ENCODE measurements at regions of chr6 and their contacts with region 1.

Region 1: GRCh38 chr6:166382933-166383801 is at the start of gene MPC1:
- DNase-seq: peak; percentile 92 to 96
- ATAC-seq: peak; percentile 79 to 87
- H3K4me3 ChIP-seq: peak within 1 kb of the TSS; percentile 80 to 94 (median 90)
- H3K27ac ChIP-seq: peak within 1 kb of the TSS; percentile 93 to 99 (median 96)
- H3K4me1 ChIP-seq: peaks cover 25 to 34% of the 10 kb centered on the region in 2 donors
- H3K27me3 ChIP-seq: no peaks in the 10 kb centered on the region
- CTCF ChIP-seq: no peak
- POLR2A ChIP-seq: peak; percentile 82 to 94
- total RNA-seq, gene MPC1: 75.0 to 127 (median 97.4) TPM

Region 2: GRCh38 chr6:166275714-166276166 is 107.4 kb before region 1 on chr6:
- in situ Hi-C with region 1: no loop called
- intact Hi-C with region 1: loop called (anchors 5 kb)
- DNase-seq: peak in 1 of 2 donors; percentile 42
- ATAC-seq: peak; percentile 62 to 77
- H3K4me3 ChIP-seq: no peak overlapping the region
- H3K27ac ChIP-seq: no peak overlapping the region
- H3K4me1 ChIP-seq: no peaks in the 10 kb centered on the region
- H3K27me3 ChIP-seq: no peaks in the 10 kb centered on the region
- CTCF ChIP-seq: peak; percentile 86 to 100 (median 91)
- POLR2A ChIP-seq: no peak

Region 3: GRCh38 chr6:166342349-166343149 is 40.6 kb before region 1 on chr6 and contains the start of gene SFT2D1:
- in situ Hi-C with region 1: no loop called
- intact Hi-C with region 1: loop called (anchors 1 kb)
- DNase-seq: peak; percentile 65 to 76
- ATAC-seq: peak; percentile 94 to 96
- H3K4me3 ChIP-seq: peak within 1 kb of the TSS; percentile 91 to 100 (median 94)
- H3K27ac ChIP-seq: peak within 1 kb of the TSS; percentile 81 to 96 (median 92)
- H3K4me1 ChIP-seq: peaks cover 14 to 23% of the 10 kb centered on the region in 2 donors
- H3K27me3 ChIP-seq: no peaks in the 10 kb centered on the region
- CTCF ChIP-seq: no peak
- POLR2A ChIP-seq: peak; percentile 86 to 87
- total RNA-seq, gene SFT2D1: 14.1 to 29.0 (median 16.8) TPM

Region 4: GRCh38 chr6:166365221-166365620 is 17.9 kb before region 1 on chr6:
- in situ Hi-C with region 1: no loop called
- intact Hi-C with region 1: loop called (anchors 1 kb)
- DNase-seq: peak in 1 of 2 donors; percentile 19
- ATAC-seq: peak; percentile 49 to 55
- H3K4me3 ChIP-seq: no peak overlapping the region
- H3K27ac ChIP-seq: peak overlapping the region; percentile 66 to 72 (median 70)
- H3K4me1 ChIP-seq: peaks cover 39 to 47% of the 10 kb centered on the region in 2 donors
- H3K27me3 ChIP-seq: no peaks in the 10 kb centered on the region
- CTCF ChIP-seq: no peak
- POLR2A ChIP-seq: no peak

Region 5: GRCh38 chr6:166556871-166557322 is 173.7 kb after region 1 on chr6:
- in situ Hi-C with region 1: no loop called
- intact Hi-C with region 1: loop called (anchors 5 kb)
- DNase-seq: peak; percentile 97 to 99
- ATAC-seq: peak; percentile 81 to 90
- H3K4me3 ChIP-seq: peak overlapping the region; percentile 27 to 44 (median 35)
- H3K27ac ChIP-seq: peak overlapping the region; percentile 86 to 91 (median 86)
- H3K4me1 ChIP-seq: peaks cover 37 to 69% of the 10 kb centered on the region in 2 donors
- H3K27me3 ChIP-seq: no peaks in the 10 kb centered on the region
- CTCF ChIP-seq: peak in 2 of 5 experiments; percentile 11 to 27
- POLR2A ChIP-seq: peak; percentile 88 to 94

Region 6: DNA sequence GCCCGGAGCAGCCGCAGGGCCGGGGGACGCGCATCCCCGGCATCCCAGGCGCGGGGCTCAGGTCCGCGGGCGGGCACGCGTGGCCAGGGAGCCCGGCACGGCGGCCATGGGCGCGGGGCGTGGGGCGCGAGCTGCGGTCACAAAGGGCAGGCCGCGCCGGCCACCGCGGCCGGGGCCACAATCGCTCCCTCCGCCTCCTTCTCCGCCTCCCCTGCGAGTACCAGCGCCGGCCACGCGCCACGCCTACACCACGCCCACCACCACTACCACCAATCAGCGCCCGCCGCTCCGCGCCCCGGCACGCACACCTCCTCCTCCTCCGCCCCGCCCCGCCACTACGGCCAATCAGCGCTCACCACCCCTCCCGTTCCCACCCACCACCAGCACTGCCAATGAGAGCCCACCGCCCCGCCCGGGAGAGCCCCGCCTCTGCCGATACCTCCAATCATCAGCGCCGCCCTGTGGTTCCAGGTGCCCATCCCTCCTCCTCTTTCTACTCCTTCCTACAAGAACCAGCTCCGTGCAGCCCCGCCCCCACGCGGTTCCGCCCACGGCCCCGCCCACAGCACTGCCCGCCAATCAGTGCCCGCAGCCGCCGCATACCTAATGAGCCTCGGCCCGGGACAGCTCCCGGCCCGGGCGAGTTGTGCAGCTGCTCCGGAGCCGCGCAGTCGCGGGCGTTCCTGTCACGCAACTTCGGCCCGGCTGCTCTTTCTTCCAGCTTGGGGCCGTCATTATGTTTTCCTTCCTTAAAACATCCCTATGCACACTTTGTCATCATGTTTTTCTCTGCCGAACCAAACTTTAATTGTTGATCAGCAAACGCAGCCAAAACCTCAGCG is 244.1 kb after region 1 on chr6 and contains the start of gene RPS6KA2:
- in situ Hi-C with region 1: no loop called
- intact Hi-C with region 1: loop called (anchors 2 kb)
- DNase-seq: peak; percentile 100
- ATAC-seq: peak; percentile 72 to 77
- H3K4me3 ChIP-seq: peak within 1 kb of the TSS; percentile 71 to 81 (median 73)
- H3K27ac ChIP-seq: peak within 1 kb of the TSS; percentile 91 to 97 (median 96)
- H3K4me1 ChIP-seq: peaks cover 33 to 51% of the 10 kb centered on the region in 2 donors
- H3K27me3 ChIP-seq: no peaks in the 10 kb centered on the region
- CTCF ChIP-seq: peak in 1 of 5 experiments; percentile 25
- POLR2A ChIP-seq: peak; percentile 97 to 98
- total RNA-seq, gene RPS6KA2: 18.7 to 35.7 (median 27.4) TPM

Measured in gastrocnemius medialis (tissue), 4 donors.